Activated CD4-positive, alpha-beta T cell treated with anti-CD3 and anti-CD28 coated beads, Interleukin-2, amount 10 ng/mL, durations not matched to agents 24 days and 14 days (primary cell): ENCODE measurements at regions of chr3 and their contacts with region 1.

Region 1: DNA sequence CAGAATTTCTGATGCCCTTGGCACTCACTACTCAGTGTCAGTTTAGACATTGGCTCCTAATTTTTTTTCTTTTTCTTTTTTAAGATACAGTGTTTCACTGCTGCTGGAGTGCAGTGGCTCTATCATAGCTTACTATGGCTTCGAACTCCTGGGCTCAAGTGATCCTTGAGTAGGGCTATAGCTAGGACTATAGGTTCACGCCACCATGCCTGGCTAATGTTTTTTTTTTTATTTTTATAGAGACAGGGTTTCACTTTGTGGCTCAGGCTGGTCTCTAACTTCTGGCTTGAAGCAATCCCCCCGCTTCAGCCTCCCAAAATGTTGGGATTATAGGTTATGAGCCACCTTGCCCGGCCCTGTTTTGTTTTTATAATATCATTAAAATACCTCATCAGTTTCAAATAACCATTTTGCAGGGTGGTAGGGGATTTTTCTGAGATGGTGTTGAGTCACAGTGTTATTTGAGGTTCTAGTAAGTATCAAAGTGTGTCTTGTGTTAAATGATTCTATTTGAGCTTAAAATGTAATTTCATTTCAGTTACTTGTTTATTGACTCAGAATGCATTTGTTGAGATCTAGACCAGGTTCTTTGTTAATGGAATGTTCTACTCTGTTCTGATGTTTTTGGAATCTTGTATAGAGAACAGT is 7.0 kb downstream of the FNDC3B start:
- DNase-seq: no peak
- H3K4me3 Mint-ChIP-seq: no peak overlapping the region
- H3K27ac Mint-ChIP-seq: peak overlapping the region; percentile 13
- H3K4me1 Mint-ChIP-seq: peaks cover 21% of the 10 kb centered on the region
- H3K27me3 Mint-ChIP-seq: peaks cover 1% of the 10 kb centered on the region

Region 2: DNA sequence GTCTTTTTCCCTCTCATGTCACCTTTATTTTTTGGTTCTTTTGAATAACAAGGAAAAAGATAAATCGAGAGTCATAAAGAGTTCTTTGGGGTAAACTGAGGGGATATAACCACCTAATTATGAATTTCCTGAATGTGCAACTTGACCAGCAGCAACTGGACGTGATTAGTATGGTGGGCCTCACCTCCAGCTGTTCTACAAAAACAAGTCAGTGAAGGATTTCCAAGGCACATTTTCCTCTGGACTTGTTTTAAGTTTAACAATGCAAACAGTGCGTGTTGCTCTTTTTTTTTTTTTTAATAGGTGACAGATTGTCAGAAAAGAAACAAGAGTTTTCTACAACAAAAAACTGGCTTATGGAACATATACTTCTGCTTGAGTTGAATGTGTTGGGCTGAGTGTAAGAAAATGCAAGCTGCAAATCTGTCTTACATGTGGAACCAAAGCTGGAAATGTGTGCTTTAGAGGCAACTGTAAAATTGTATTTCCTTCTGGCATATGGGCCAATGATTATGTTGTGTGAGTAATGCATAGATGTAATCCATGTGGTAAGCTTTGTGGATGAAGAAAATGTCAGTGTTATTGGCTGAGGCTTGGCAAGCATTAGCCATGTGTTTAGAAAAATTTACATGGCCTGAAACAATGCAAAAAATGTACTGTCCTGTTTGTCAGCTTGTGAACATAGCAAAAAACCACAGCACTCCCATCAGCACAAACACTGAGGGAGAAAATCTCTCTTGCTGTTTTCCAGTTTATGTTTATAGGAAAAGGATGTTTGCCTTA is 51.6 kb before region 1 on chr3:
- intact Hi-C with region 1: no loop called
- DNase-seq: no peak
- H3K4me3 Mint-ChIP-seq: no peak overlapping the region
- H3K27ac Mint-ChIP-seq: no peak overlapping the region
- H3K4me1 Mint-ChIP-seq: peaks cover 4% of the 10 kb centered on the region
- H3K27me3 Mint-ChIP-seq: peaks cover 2% of the 10 kb centered on the region

Region 3: GRCh38 chr3:172084871-172085556 is 38.6 kb after region 1 on chr3:
- intact Hi-C with region 1: loop called (anchors 2 kb)
- DNase-seq: peak; percentile 53
- H3K4me3 Mint-ChIP-seq: no peak overlapping the region
- H3K27ac Mint-ChIP-seq: peak overlapping the region; percentile 1
- H3K4me1 Mint-ChIP-seq: peaks cover 29% of the 10 kb centered on the region
- H3K27me3 Mint-ChIP-seq: no peaks in the 10 kb centered on the region